MCF 10A (cell line): ENCODE measurements at regions of chr7 and their contacts with region 1.

Region 1: DNA sequence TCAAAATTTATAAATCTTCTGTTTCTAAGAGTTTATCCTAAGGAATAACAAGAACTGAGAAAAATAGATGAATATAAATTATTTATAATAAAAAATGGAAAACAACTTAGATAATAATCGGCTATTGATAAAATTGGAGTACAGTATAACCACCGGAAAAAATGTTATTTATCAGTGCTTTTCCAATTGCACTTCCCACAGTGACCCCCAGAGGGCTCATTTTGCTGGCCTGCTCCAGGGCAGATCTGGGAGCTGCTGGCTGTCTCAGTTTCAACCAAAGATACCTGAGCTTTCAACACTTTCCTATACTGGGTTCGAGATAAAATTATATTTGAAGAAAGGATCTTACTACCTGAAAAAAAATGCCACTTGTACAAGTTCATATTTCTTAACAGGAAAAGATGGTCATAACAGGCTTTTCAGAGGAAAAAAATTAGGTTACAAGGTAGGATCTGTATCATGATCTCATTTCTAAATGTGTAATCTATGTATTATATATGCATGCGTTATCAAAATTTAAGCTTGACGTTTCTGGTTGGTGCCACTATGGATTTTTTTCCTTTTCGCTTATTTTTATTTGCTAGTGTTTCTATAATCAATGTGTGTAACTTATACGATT is 165.7 kb downstream of the NPSR1 start:
- DNase-seq: peak; percentile 57
- H3K4me3 Mint-ChIP-seq: no peak overlapping the region
- H3K27ac Mint-ChIP-seq: no peak overlapping the region
- H3K4me1 Mint-ChIP-seq: no peaks in the 10 kb centered on the region
- H3K27me3 Mint-ChIP-seq: peaks cover 10% of the 10 kb centered on the region
- CTCF ChIP-seq: peak; percentile 92

Region 2: DNA sequence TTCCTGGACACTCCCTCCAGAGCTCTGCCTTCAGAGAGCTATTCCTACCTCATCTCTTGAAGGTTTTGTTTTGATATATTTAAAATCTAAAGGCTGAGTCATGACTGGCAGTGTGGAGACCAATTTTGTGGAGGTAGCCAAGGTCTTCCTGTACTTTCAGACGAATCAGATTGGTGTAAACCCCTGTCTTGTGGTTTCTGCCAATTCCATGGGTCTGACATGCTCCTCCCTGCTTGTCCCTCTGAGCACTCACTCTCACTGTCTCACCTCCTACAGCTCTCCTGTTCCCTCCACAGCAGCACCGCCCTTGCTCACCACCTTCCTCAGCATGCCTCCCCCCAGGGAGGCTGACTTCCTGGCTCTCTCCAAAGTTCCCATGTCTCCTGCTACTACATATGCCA is 14.1 kb after region 1 on chr7:
- CTCF ChIA-PET with region 1: interaction called, 44 read pairs
- POLR2A ChIA-PET with region 1: no interaction called
- intact Hi-C with region 1: no loop called
- DNase-seq: peak; percentile 54
- H3K4me3 Mint-ChIP-seq: no peak overlapping the region
- H3K27ac Mint-ChIP-seq: no peak overlapping the region
- H3K4me1 Mint-ChIP-seq: peaks cover 13% of the 10 kb centered on the region
- H3K27me3 Mint-ChIP-seq: no peaks in the 10 kb centered on the region
- CTCF ChIP-seq: no peak

Region 3: GRCh38 chr7:34928049-34928448 is 104.3 kb after region 1 on chr7:
- CTCF ChIA-PET with region 1: interaction called, 3 read pairs
- POLR2A ChIA-PET with region 1: no interaction called
- intact Hi-C with region 1: loop called (anchors 5 kb)
- DNase-seq: peak; percentile 56
- H3K4me3 Mint-ChIP-seq: no peak overlapping the region
- H3K27ac Mint-ChIP-seq: no peak overlapping the region
- H3K4me1 Mint-ChIP-seq: no peaks in the 10 kb centered on the region
- H3K27me3 Mint-ChIP-seq: no peaks in the 10 kb centered on the region
- CTCF ChIP-seq: peak; percentile 41